Activated CD4-positive, alpha-beta T cell treated with anti-CD3 and anti-CD28 coated beads, Interleukin-2, amount 10 ng/mL, durations not matched to agents 24 days and 14 days (primary cell): ENCODE measurements at regions of chr1 and their contacts with region 1.

Region 1: GRCh38 chr1:201792534-201793305 is 36.2 kb upstream of the IPO9 start:
- DNase-seq: peak; percentile 85
- H3K4me3 Mint-ChIP-seq: no peak overlapping the region
- H3K27ac Mint-ChIP-seq: no peak overlapping the region
- H3K4me1 Mint-ChIP-seq: peaks cover 17% of the 10 kb centered on the region
- H3K27me3 Mint-ChIP-seq: peaks cover 3% of the 10 kb centered on the region

Region 2: DNA sequence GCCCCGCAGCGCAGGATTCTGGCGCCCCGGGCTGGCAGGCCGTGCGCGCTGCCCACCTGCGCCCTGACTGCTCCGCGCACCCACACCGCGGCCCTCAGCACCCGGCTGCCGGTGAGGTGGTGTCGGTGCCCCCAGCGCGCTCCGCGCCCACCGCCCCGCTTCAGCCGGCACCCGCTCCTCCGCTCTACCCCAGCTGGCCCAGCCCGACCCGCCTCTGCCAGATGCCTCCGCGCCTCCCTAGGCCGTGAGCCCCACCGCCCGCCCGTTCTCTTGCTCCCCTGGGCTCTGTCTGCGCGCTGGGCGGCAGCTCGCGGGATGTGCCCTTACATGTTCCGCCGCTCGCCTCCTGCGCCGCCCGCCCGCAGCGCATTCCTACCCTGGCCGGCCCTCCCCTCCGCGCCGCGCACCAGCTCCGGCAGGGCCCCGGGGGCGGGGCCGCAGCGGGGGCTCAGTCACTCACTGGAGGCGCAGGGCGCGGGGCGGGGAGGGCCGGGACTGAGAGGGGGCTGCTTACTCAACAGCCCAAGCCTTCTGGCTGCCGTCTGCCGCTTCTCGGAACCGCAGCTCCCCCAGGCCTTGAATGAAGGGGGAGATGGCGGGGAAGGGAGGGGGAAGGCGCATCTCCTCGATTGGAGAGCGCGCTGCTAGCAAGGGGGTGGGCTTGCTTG is 323.7 kb before region 1 on chr1 and contains the start of gene PHLDA3:
- intact Hi-C with region 1: no loop called
- DNase-seq: peak; percentile 92
- H3K4me3 Mint-ChIP-seq: peak within 1 kb of the TSS; percentile 82
- H3K27ac Mint-ChIP-seq: peak within 1 kb of the TSS; percentile 56
- H3K4me1 Mint-ChIP-seq: peaks cover 13% of the 10 kb centered on the region
- H3K27me3 Mint-ChIP-seq: peaks cover 30% of the 10 kb centered on the region
- total RNA-seq, gene PHLDA3: 11.7 and 12.0 TPM in 2 replicates

Region 3: GRCh38 chr1:201559679-201560162 is 233.0 kb before region 1 on chr1:
- intact Hi-C with region 1: loop called (anchors 1 kb)
- DNase-seq: peak; percentile 88
- H3K4me3 Mint-ChIP-seq: no peak overlapping the region
- H3K27ac Mint-ChIP-seq: no peak overlapping the region
- H3K4me1 Mint-ChIP-seq: peaks cover 1% of the 10 kb centered on the region
- H3K27me3 Mint-ChIP-seq: peaks cover 2% of the 10 kb centered on the region

Region 4: DNA sequence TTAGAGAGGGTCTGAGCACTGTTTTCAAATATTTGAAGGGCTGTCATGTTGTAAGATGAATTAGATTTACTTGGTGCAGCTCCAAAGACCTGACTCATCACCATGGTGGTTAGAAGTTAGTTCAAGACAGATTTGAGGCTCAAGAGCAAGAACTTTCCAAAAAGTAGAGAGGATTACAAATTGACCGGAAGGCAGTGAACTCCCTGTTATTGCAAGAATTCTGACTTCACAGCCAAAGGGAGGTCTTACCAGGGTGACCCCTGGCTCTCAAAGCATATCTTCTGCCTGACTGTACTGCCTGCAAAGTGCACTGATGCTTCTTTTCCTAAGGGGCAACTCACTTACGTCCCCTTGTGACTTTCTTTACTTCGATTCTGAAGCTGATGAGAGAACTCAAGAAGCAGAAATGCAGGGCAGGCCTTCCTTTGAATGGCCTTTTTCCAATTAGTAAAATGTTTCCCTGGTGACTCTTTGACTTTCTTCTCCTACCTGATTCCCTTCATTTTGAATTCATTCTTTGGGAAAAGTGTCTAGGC is 167.4 kb before region 1 on chr1:
- intact Hi-C with region 1: no loop called
- DNase-seq: no peak
- H3K4me3 Mint-ChIP-seq: no peak overlapping the region
- H3K27ac Mint-ChIP-seq: no peak overlapping the region
- H3K4me1 Mint-ChIP-seq: no peaks in the 10 kb centered on the region
- H3K27me3 Mint-ChIP-seq: peaks cover 2% of the 10 kb centered on the region

Region 5: DNA sequence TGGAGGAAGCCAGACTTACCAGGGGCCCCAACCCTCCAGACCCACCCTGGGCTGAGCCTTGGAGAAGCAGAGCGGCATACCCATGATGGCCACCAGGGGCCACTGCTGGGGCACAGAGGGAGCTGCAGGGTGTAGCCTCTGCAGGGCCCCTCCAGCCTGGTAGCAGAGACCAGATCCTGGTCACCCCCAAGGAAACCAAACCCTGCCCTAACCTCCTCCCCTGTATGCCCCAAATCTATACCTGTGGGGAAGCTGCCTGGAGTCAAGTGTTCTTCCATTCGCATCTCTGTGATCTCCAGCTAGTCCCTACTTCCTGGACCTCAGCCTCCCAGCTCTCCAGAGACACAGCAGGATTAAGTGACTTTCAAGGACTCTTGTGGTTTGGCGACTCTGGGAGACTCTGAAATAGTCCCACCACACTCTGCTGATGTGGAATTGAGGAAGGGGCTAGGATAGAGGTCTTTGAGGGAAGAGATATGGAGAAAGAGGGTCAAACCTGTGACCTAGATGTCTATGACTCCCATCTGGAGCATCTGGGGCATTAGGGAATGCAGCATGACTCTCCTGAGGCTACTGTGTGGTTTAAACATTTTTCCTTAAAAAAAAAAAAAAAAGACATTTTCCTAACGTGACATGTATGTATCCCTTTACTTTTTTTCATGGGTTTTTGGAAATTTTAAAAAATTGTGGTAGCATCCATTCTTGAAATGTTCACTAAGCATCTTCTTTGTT is 83.0 kb before region 1 on chr1:
- intact Hi-C with region 1: loop called (anchors 1 kb)
- DNase-seq: peak; percentile 88
- H3K4me3 Mint-ChIP-seq: no peak overlapping the region
- H3K27ac Mint-ChIP-seq: no peak overlapping the region
- H3K4me1 Mint-ChIP-seq: no peaks in the 10 kb centered on the region
- H3K27me3 Mint-ChIP-seq: peaks cover 2% of the 10 kb centered on the region